ENCODE measurements at regions of chr2 and their contacts with region 1.

Region 1: DNA sequence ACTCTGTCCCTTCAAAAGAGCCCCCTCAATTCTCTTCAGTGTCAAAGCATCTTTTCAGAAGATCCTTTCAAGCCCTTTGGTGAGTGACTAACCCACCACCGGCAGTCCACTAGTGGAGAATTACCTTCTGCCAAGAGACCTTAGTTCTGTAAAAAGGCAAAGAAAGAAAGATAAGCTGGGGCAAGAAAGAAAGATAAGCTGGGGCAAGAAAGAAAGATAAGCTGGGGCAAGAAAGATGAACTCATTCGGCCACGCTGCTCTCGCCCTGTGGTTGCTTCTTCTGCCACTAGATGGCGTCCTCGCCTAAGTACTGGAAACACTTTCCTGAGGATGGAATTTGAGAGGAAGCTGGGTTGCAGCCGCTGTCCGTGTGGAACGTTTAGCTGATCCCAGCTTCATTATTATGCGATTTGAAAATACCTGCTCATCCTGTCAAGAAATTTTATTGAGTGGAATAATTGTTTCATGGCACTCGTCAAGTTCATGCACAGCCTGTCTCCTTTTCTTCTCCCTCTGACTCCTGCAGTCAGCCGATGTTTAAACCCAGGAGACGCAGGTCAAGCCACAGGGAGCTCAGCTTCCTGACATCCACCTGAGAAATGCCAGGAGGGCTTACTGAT is 17.3 kb upstream of the ANXA4 start:
- DNase-seq: peak; percentile 65 to 98 (median 86)
- ATAC-seq: peak; percentile 93 to 99 (median 97)
- H3K4me3 ChIP-seq: peak overlapping the region in 2 of 4 donors; percentile 22 to 23
- H3K27ac ChIP-seq: no peak overlapping the region
- H3K4me1 ChIP-seq: peaks cover 0 to 4% (median 0%) of the 10 kb centered on the region in 3 donors
- H3K27me3 ChIP-seq: no peaks in the 10 kb centered on the region
- CTCF ChIP-seq: peak; percentile 92 to 95 (median 92)

Region 2: GRCh38 chr2:69807821-69808540 is 83.3 kb after region 1 on chr2:
- intact Hi-C with region 1: loop called in 2 of 3 experiments (anchors 5 to 10 kb)
- DNase-seq: no peak
- ATAC-seq: no peak
- H3K4me3 ChIP-seq: no peak overlapping the region
- H3K27ac ChIP-seq: no peak overlapping the region
- H3K4me1 ChIP-seq: no peaks in the 10 kb centered on the region
- H3K27me3 ChIP-seq: no peaks in the 10 kb centered on the region
- CTCF ChIP-seq: no peak

Region 3: DNA sequence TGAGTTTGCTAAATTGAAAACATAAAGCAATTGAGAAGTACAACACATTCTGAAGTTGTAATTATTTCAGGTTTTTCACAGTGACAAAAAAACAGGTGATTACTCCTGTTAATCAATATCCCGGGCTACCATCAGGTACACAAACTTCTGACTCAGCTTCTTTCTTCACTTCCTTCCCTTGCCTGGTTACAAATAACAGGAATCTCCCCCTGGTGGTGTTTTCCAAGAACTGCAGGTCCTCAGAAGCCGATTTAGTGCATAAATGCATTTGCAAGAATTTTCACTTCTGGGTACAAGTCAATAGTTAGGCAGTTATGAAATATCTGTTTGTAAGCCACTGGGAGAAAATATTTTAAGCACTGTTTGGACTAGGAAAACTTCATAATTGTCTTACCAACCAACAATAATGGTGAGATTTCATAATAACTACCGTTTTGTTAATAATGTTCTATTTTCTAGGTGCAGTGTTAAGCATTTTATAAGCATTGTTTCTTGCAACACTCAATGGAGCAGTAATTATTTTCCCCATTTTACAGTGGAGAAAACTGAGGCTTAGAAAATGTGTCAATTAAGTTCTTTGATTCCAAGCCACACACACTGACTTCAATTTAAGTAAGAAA is 92.4 kb after region 1 on chr2:
- intact Hi-C with region 1: loop called in 2 of 3 experiments (anchors 5 to 10 kb)
- DNase-seq: peak in 4 of 6 donors; percentile 62 to 83 (median 66)
- ATAC-seq: peak; percentile 78 to 89 (median 85)
- H3K4me3 ChIP-seq: no peak overlapping the region
- H3K27ac ChIP-seq: peak overlapping the region in 1 of 4 donors; percentile 40
- H3K4me1 ChIP-seq: no peaks in the 10 kb centered on the region
- H3K27me3 ChIP-seq: no peaks in the 10 kb centered on the region
- CTCF ChIP-seq: peak; percentile 77 to 89 (median 84)